Right ventricle myocardium inferior (tissue), 1 donor: ENCODE measurements at regions of chr16 and their contacts with region 1.

Region 1: GRCh38 chr16:8963825-8964441 is at the start of gene USP7:
- DNase-seq: peak; percentile 98
- ATAC-seq: peak; percentile 97
- total RNA-seq, gene USP7: 61.6 TPM

Region 2: GRCh38 chr16:8436931-8437330 is 527.0 kb before region 1 on chr16:
- intact Hi-C with region 1: no loop called
- DNase-seq: no peak
- ATAC-seq: no peak

Region 3: DNA sequence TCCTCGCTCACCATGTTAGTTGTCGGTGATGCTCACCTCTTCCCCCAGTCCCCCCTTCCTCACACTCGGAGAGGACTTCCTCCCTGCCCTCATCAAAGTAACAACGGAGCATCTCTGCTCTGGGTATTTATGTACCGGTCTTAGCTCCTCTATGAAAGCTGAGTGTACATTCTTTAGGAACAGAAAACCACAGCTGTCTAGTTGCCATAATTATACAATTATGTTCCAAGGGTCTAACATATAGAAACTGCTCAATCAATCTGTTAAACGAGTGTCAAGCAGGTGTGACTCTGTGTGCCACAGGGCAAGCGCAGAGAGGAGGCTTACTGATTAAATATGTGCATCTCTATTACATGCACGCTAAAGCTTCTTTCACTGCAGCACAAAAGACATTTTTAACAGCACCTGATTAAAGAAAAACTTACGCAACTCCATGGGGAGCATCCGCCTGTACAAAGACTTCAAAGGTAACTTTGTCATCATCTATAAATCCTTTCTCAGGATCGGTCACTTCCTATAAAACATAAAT is 43.9 kb before region 1 on chr16:
- intact Hi-C with region 1: loop called (anchors 10 kb)
- DNase-seq: no peak
- ATAC-seq: no peak

Region 4: GRCh38 chr16:9090960-9091866 is 127.3 kb after region 1 on chr16 and contains the start of gene HAPSTR1:
- intact Hi-C with region 1: loop called (anchors 5 kb)
- DNase-seq: peak; percentile 100
- ATAC-seq: peak; percentile 96
- total RNA-seq, gene HAPSTR1: 52.5 TPM